K562 (cell line): ENCODE measurements at regions of chr10 and their contacts with region 1.

Region 1: GRCh38 chr10:17872191-17873091 is 63.3 kb downstream of the MRC1 start:
- DNase-seq: peak in 1 of 4 experiments; percentile 20
- ATAC-seq: 0 out of 3 replicates have a peak, but pooled peaks have one; percentile 38
- H3K4me3 ChIP-seq: no peak overlapping the region
- H3K27ac ChIP-seq: no peak overlapping the region
- H3K4me1 ChIP-seq: no peaks in the 10 kb centered on the region
- H3K27me3 ChIP-seq: no peaks in the 10 kb centered on the region; a peak in 1 of 5 replicates
- CTCF ChIP-seq: peak; percentile 29 to 70 (median 61); a peak in 5 of 6 replicates
- EP300 ChIP-seq: no peak
- POLR2A ChIP-seq: no peak
- RAD21 ChIP-seq: peak; percentile 76 to 85

Region 2: GRCh38 chr10:17737027-17737965 is 135.1 kb before region 1 on chr10:
- CTCF ChIA-PET with region 1: interaction called, 5 read pairs
- POLR2A ChIA-PET with region 1: no interaction called
- in situ Hi-C with region 1: no loop called
- intact Hi-C with region 1: loop called (anchors 10 kb)
- DNase-seq: peak in 1 of 4 experiments; percentile 54
- ATAC-seq: peak; percentile 48; the same call in 1 of the 3 replicates
- H3K4me3 ChIP-seq: no peak overlapping the region
- H3K27ac ChIP-seq: no peak overlapping the region
- H3K4me1 ChIP-seq: peaks cover 3 to 4% of the 10 kb centered on the region in 2 experiments; a peak in 3 of 5 replicates
- H3K27me3 ChIP-seq: no peaks in the 10 kb centered on the region
- CTCF ChIP-seq: peak; percentile 39 to 75 (median 69); a peak in 5 of 6 replicates
- EP300 ChIP-seq: no peak
- POLR2A ChIP-seq: no peak
- RAD21 ChIP-seq: peak; percentile 26 to 61; a peak in 2 of 4 replicates